Ascending aorta (tissue), 2 donors: ENCODE measurements at regions of chr12 and their contacts with region 1.

Region 1: DNA sequence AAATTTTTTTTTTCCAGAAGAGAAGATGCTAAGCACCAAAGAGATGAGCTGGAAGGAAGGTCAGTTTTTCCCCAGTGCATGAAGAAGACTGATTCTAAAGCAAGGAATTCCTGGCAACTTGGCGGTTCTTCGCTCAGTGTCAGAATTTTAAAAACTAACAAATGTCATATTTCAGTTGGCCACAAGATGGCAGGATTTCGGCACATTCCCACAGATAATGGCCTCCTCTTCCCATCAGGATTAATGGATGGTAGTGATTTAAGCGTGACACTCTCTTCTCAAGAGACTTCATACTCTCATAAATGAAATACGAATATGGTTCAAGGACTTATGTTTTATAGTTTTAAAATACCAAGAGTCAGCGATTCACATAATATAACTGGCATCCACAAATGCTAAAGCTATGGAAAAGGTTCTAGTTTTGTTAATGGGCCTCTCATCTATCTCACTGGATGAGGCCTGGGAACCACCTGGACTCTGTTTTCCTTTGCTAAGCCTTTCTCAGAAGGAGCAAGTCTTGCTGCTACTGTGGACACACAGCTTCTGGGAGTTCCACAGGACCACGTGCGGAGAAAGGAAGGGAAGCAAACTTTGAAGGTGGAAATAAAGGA is 46.1 kb upstream of the PTPRO start:
- DNase-seq: no peak
- H3K4me3 ChIP-seq: no peak overlapping the region
- H3K27ac ChIP-seq: peak overlapping the region; percentile 92 to 95
- H3K4me1 ChIP-seq: peaks cover 12 to 33% of the 10 kb centered on the region in 2 donors
- H3K27me3 ChIP-seq: no peaks in the 10 kb centered on the region
- CTCF ChIP-seq: peak; percentile 57 to 81 (median 71)

Region 2: DNA sequence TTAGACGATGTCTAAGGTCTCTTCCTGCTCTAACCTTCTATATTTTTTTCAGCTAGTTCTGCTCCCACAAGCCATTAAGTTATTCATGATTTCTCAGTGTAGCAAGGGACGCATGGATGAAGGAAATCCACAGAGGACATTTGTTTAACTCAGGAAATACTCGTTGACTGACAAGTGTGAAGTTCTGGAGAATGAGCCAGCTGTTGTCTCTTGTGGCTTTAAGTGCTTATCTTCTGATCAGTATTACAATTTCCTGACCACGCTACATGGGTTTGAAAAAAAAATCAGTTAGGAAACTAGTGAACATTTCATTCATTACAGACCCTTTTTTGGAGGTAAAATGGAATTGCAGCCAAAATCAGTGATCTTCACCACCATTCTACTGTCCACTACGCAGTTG is 632.9 kb before region 1 on chr12:
- intact Hi-C with region 1: loop called (anchors 10 kb)
- DNase-seq: no peak
- H3K4me3 ChIP-seq: no peak overlapping the region
- H3K27ac ChIP-seq: peak overlapping the region in 1 of 2 donors; percentile 9
- H3K4me1 ChIP-seq: peaks cover 0 to 23% of the 10 kb centered on the region in 2 donors
- H3K27me3 ChIP-seq: no peaks in the 10 kb centered on the region
- CTCF ChIP-seq: no peak

Region 3: GRCh38 chr12:15165012-15165659 is 111.1 kb before region 1 on chr12:
- intact Hi-C with region 1: loop called (anchors 5 kb)
- DNase-seq: peak in 1 of 2 donors; percentile 87
- H3K4me3 ChIP-seq: peak overlapping the region; percentile 7 to 26
- H3K27ac ChIP-seq: peak overlapping the region; percentile 78 to 88
- H3K4me1 ChIP-seq: peaks cover 12 to 51% of the 10 kb centered on the region in 2 donors
- H3K27me3 ChIP-seq: no peaks in the 10 kb centered on the region
- CTCF ChIP-seq: no peak

Region 4: GRCh38 chr12:15404485-15404884 is 128.3 kb after region 1 on chr12:
- intact Hi-C with region 1: loop called (anchors 5 kb)
- DNase-seq: no peak
- H3K4me3 ChIP-seq: no peak overlapping the region
- H3K27ac ChIP-seq: peak overlapping the region; percentile 27 to 34
- H3K4me1 ChIP-seq: peaks cover 0 to 3% of the 10 kb centered on the region in 2 donors
- H3K27me3 ChIP-seq: no peaks in the 10 kb centered on the region
- CTCF ChIP-seq: no peak

Region 5: GRCh38 chr12:15522565-15523187 is 246.5 kb after region 1 on chr12:
- intact Hi-C with region 1: loop called (anchors 1 kb)
- DNase-seq: no peak
- H3K4me3 ChIP-seq: no peak overlapping the region
- H3K27ac ChIP-seq: no peak overlapping the region
- H3K4me1 ChIP-seq: no peaks in the 10 kb centered on the region
- H3K27me3 ChIP-seq: no peaks in the 10 kb centered on the region
- CTCF ChIP-seq: peak; percentile 53 to 64 (median 55)

Region 6: DNA sequence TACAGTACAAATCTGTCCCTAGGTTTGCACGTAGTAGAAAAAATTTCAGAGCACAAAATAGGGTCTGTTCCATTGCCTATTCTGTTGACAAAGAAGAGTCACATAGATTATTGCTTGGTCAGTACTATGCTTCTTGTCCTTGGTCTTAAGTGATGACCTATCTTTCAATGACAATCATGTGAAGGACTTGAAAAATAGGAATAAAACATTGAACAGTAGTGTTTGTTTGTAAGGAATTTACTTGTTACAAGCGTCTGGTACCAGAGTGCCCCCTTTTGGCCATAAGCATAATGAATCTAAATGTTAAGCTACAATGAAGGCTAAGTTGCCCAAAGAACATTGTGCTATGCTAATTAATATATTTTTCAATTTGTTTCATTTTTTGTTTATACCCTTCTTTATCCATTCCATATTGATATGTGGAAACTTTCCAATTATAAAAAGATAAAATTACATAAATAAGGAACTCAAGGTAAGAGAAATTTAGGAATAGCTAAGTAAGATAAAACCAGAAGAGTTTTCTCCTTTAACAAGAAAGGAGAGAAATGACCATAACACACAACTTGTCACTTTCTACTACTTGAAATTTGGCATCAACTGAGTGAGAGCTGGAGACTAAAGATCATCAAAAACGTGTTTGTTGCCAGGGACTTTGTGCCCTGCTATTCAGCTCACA is 308.3 kb after region 1 on chr12:
- intact Hi-C with region 1: loop called (anchors 1 kb)
- DNase-seq: no peak
- H3K4me3 ChIP-seq: no peak overlapping the region
- H3K27ac ChIP-seq: no peak overlapping the region
- H3K4me1 ChIP-seq: no peaks in the 10 kb centered on the region
- H3K27me3 ChIP-seq: no peaks in the 10 kb centered on the region
- CTCF ChIP-seq: peak; percentile 60 to 77 (median 64)

Region 7: DNA sequence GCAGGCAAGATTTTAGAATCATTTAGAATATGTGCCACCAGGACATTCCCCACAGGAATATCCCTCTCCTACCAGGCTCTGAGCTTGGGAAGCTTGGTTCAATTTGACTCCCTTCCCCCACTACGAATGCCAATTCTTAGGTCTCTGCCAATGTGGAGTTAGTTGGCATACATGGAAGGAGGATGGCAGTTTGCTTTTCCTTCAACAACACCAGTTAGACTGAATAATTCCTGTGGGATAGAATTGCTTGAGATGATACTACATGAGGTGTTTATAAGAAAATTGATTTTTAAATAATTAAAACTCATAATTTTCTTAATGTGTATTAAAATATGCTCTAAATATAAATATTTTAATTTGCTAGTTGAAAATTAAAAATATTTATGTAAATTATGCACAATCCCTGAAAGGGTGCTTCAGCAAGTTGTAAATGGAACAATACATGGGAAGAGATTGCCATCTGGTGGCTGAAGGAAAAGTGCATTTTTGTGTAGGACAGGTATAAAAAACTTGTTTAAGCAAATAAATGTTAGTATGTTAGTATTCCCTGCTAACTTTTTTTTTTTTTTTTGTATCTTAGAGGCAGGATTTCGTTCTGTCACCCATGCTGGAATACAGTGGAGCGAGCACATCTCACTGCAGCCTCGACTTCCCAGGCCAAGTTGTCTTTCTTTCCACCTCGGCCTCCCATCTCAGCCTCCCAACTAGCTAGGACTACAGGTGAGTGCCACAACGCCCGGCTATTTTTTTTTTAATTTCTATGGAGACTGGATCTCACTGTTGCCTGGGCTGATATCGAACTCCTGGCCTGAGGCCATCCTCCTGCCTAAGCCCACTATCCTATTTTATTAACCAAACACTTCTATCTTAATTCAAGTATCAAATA is 580.1 kb after region 1 on chr12:
- intact Hi-C with region 1: loop called (anchors 10 kb)
- DNase-seq: peak in 1 of 2 donors; percentile 77
- H3K4me3 ChIP-seq: no peak overlapping the region
- H3K27ac ChIP-seq: no peak overlapping the region
- H3K4me1 ChIP-seq: peaks cover 0 to 3% of the 10 kb centered on the region in 2 donors
- H3K27me3 ChIP-seq: no peaks in the 10 kb centered on the region
- CTCF ChIP-seq: peak; percentile 71 to 84 (median 80)